K562 (cell line): ENCODE measurements at regions of chr18 and their contacts with region 1.

Region 1: GRCh38 chr18:31942999-31943865 is at the start of gene TRAPPC8:
- DNase-seq: peak; percentile 94 to 99 (median 96)
- ATAC-seq: peak; percentile 94
- H3K4me3 ChIP-seq: peak within 1 kb of the TSS; percentile 93
- H3K27ac ChIP-seq: peak within 1 kb of the TSS; percentile 94
- H3K4me1 ChIP-seq: peaks cover 17 to 23% of the 10 kb centered on the region in 2 experiments; a peak in 4 of 5 replicates
- H3K27me3 ChIP-seq: no peaks in the 10 kb centered on the region
- CTCF ChIP-seq: peak in 2 of 3 experiments; percentile 29 to 32; a peak in 3 of 6 replicates
- EP300 ChIP-seq: peak; percentile 61; the same call in 1 of the 2 replicates
- POLR2A ChIP-seq: peak; percentile 92
- RAD21 ChIP-seq: peak in 1 of 2 experiments; percentile 26; a peak in 2 of 4 replicates
- polyA plus RNA-seq, gene TRAPPC8: 20.1 to 23.4 TPM

Region 2: DNA sequence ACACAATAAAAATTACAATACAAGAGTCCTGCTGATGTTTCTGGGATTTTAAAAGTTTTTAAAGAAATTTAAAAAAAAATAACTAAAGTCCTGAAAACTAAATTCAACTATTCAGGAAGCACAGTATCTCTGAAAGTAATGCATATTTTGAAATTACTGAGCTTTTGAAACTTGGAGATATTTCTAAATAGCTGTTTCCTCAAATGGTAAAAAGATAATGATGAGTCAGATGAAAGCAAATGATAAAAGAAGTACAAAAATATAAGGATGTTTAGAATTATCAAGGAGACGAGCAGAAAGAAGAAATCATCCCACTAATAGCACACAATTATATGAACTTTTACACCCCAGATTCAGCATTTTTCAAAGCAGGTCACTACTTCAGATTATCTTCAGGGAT is 92.4 kb before region 1 on chr18:
- CTCF ChIA-PET with region 1: no interaction called
- POLR2A ChIA-PET with region 1: no interaction called
- in situ Hi-C with region 1: no loop called
- intact Hi-C with region 1: no loop called
- DNase-seq: no peak
- ATAC-seq: no peak
- H3K4me3 ChIP-seq: no peak overlapping the region
- H3K27ac ChIP-seq: no peak overlapping the region
- H3K4me1 ChIP-seq: no peaks in the 10 kb centered on the region
- H3K27me3 ChIP-seq: no peaks in the 10 kb centered on the region
- CTCF ChIP-seq: no peak
- EP300 ChIP-seq: no peak
- POLR2A ChIP-seq: no peak
- RAD21 ChIP-seq: no peak

Region 3: DNA sequence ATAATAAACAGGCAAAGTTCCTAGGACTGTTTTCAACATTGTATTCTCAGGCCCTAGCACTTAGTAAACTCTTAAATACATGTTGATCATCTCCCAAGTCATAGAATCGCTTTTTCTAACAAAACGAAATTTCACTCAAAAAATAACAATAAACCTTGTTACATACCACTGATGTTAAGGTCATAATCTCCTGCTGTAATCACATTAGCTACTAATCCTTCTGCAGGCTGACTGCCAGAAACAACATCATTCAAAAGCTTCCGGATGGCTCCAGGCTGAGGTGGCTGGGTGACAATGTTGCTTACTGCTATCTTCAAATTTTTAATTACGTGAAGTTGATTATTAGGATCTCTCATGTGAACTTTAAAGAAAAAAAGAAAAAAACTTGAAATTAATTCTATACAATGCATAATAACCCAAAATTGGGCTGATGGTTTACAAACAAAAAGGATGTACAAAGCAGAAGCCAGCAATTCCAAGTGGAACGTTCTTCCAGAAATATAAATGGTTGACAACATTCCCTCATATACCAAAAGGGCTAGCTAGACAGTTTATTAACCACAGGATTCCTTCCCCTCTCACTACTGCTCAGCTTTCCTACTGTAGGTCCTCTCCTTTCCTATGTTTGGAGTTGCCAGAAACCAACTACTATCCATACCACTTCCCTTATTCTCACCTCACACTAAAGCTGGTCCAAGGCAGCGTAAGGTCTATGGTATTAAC is 11.9 kb before region 1 on chr18:
- CTCF ChIA-PET with region 1: no interaction called
- POLR2A ChIA-PET with region 1: interaction called, 20 read pairs
- in situ Hi-C with region 1: no loop called
- intact Hi-C with region 1: no loop called
- DNase-seq: no peak
- ATAC-seq: no peak; the same call in 1 of the 3 replicates
- H3K4me3 ChIP-seq: no peak overlapping the region
- H3K27ac ChIP-seq: no peak overlapping the region
- H3K4me1 ChIP-seq: no peaks in the 10 kb centered on the region
- H3K27me3 ChIP-seq: no peaks in the 10 kb centered on the region
- CTCF ChIP-seq: no peak
- EP300 ChIP-seq: no peak
- POLR2A ChIP-seq: no peak
- RAD21 ChIP-seq: no peak

Region 4: DNA sequence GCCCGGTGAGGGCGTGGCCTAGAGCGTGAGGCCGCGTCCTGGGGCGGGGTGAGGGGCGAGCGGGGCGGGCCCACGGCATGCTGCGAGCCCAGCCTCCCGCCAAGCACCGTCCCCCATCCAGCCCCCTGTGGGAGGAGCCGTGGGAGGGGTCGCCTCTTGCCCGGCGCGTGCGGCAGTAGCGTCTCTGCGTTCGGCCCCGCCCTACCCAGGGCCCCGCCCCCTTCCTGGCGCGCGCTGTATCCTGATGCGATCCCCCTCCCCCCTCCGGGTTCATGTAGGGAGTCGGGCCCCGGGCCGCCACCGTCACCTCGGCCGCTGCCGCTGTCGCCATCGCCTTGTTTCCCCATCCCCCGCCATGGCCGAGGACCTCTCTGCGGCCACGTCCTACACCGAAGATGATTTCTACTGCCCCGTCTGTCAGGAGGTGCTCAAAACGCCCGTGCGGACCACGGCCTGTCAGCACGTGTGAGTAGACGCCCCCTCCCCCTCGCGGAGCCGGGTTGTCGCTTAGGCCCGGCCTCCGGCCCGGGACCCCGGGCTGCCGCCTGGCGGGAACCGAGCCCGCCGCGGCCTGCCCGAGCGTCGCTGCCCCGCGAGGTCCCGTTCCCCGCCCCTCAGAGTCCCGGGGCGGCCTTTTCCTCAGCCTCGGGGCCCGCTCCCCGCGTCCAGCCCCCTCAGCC is 149.3 kb after region 1 on chr18:
- CTCF ChIA-PET with region 1: no interaction called
- POLR2A ChIA-PET with region 1: interaction called, 5 read pairs
- in situ Hi-C with region 1: no loop called
- intact Hi-C with region 1: loop called (anchors 5 kb)
- DNase-seq: peak; percentile 98 to 99 (median 99)
- ATAC-seq: peak; percentile 93
- H3K4me3 ChIP-seq: peak overlapping the region; percentile 77
- H3K27ac ChIP-seq: peak overlapping the region; percentile 98
- H3K4me1 ChIP-seq: peaks cover 28 to 31% of the 10 kb centered on the region in 2 experiments; a peak in 4 of 5 replicates
- H3K27me3 ChIP-seq: no peaks in the 10 kb centered on the region
- CTCF ChIP-seq: no peak
- EP300 ChIP-seq: no peak
- POLR2A ChIP-seq: peak; percentile 77
- RAD21 ChIP-seq: no peak

Region 5: DNA sequence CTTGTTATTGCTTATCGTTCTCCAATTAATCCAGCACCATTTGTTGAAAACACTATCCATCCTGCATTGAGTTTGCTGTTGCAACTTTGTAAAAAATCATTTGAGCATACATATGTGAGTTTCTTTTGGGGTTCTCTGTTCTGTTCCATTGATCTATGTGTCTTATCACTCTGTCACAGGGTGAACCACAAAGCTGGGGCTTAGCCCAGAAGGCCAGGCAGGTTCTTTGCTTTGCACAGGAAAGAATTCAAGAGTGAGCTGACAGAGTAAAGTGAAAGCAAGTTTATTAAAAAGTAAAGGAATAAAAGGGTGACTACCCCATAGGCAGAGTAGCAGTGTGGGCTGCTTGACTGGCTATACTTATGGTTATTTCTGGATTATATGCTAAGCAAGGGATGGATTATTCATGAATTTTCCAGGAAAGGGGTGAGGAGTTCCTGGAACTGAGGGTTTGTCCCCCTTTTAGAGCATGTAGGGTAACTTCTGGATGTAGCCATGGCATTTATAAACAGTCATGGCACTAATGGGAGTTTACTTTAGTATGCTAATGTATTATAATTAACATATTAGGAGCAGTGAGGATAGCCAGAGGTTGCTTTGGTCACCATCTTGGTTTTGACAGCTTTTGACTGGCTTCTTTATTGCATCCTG is 195.2 kb after region 1 on chr18:
- CTCF ChIA-PET with region 1: no interaction called
- POLR2A ChIA-PET with region 1: no interaction called
- in situ Hi-C with region 1: no loop called
- intact Hi-C with region 1: loop called (anchors 5 kb)
- DNase-seq: peak; percentile 16 to 82 (median 36)
- ATAC-seq: peak; percentile 90
- H3K4me3 ChIP-seq: no peak overlapping the region
- H3K27ac ChIP-seq: peak overlapping the region; percentile 40; the same call in 2 of the 3 replicates
- H3K4me1 ChIP-seq: peaks cover 8 to 17% of the 10 kb centered on the region in 2 experiments
- H3K27me3 ChIP-seq: no peaks in the 10 kb centered on the region
- CTCF ChIP-seq: no peak
- EP300 ChIP-seq: peak; percentile 20; the same call in 1 of the 2 replicates
- POLR2A ChIP-seq: no peak
- RAD21 ChIP-seq: no peak

Region 6: DNA sequence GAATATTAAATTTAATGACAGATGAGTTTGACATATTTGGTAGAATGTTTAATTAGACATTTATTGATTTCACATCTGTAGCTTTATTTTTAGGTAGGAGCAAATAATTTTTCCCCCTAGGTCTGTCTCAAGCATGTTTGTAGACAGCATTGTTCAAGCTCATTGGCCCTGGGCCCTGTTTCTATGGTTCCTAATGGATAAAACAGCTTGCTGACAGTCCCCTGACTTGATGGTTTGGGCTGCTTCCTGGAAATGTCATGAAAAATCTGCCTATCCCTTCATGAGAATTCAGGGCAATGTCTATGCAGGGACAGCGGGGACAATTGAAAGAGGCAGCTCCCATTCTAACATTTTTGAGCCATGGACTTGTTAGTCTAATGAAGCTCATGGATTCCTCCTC is 232.0 kb after region 1 on chr18:
- CTCF ChIA-PET with region 1: no interaction called
- POLR2A ChIA-PET with region 1: no interaction called
- in situ Hi-C with region 1: no loop called
- intact Hi-C with region 1: no loop called
- DNase-seq: no peak
- ATAC-seq: no peak
- H3K4me3 ChIP-seq: no peak overlapping the region
- H3K27ac ChIP-seq: no peak overlapping the region
- H3K4me1 ChIP-seq: no peaks in the 10 kb centered on the region
- H3K27me3 ChIP-seq: no peaks in the 10 kb centered on the region
- CTCF ChIP-seq: no peak
- EP300 ChIP-seq: no peak
- POLR2A ChIP-seq: no peak
- RAD21 ChIP-seq: no peak